ENCODE measurements at regions of chr4 and their contacts with region 1.

Region 1: DNA sequence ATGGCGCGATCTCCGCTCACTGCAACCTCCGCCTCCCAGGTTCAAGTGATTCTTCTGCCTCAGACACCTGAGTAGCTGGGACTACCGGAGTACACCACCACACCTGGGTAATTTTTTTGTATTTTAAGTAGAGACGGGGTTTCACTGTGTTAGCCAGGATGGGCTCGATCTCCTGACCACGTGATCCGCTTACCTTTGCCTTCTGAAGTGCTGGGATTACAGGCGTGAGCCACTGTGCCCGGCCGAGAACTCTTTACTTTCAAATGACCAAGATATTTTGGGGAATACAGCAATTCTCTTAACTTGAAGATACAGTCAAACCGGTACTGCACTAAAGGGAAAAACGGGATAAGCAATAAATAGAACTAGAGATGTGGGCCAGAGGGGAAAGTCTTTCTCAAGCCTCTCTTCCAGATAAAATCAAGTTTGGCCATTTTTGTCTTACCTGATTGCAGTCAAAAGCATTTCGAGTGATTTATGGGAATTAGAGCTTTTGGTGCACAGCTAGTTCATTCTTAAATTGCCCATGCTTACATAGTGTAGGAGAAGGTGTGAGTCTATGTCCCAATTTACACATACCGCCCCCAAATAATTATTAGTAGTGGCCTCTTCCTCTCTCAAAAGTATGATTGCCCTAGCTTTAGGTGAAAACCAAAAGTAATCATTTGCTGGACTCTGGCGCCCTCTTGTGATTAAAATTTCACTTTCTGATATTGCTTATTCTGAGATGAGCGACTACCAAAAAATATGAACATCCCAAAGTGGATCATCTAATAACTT is 53.2 kb upstream of the ABCG2 start:
- DNase-seq: peak; percentile 43 to 60 (median 58)
- H3K4me3 ChIP-seq: no peak overlapping the region
- H3K4me3 Mint-ChIP-seq: no peak overlapping the region
- H3K27ac ChIP-seq: no peak overlapping the region
- H3K27ac Mint-ChIP-seq: no peak overlapping the region
- H3K4me1 ChIP-seq: no peaks in the 10 kb centered on the region
- H3K4me1 Mint-ChIP-seq: peaks cover 0 to 3% (median 0%) of the 10 kb centered on the region in 4 donors
- H3K27me3 ChIP-seq: no peaks in the 10 kb centered on the region
- H3K27me3 Mint-ChIP-seq: peaks cover 3 to 5% of the 10 kb centered on the region in 2 donors

Region 2: GRCh38 chr4:87038837-87039615 is 1172.6 kb before region 1 on chr4:
- CTCF ChIA-PET with region 1: no interaction called
- POLR2A ChIA-PET with region 1: no interaction called
- intact Hi-C with region 1: no loop called
- DNase-seq: no peak
- H3K4me3 ChIP-seq: no peak overlapping the region
- H3K4me3 Mint-ChIP-seq: peak overlapping the region in 2 of 8 donors; percentile 1 to 2
- H3K27ac ChIP-seq: no peak overlapping the region
- H3K27ac Mint-ChIP-seq: peak overlapping the region in 3 of 7 donors; percentile 15 to 69 (median 51)
- H3K4me1 ChIP-seq: peaks cover 51% of the 10 kb centered on the region
- H3K4me1 Mint-ChIP-seq: peaks cover 45 to 85% (median 66%) of the 10 kb centered on the region in 4 donors
- H3K27me3 ChIP-seq: no peaks in the 10 kb centered on the region
- H3K27me3 Mint-ChIP-seq: no peaks in the 10 kb centered on the region

Region 3: GRCh38 chr4:87498446-87498900 is 713.2 kb before region 1 on chr4:
- CTCF ChIA-PET with region 1: interaction called, 6 read pairs
- POLR2A ChIA-PET with region 1: no interaction called
- intact Hi-C with region 1: loop called (anchors 2 kb)
- DNase-seq: no peak
- H3K4me3 ChIP-seq: no peak overlapping the region
- H3K4me3 Mint-ChIP-seq: peak overlapping the region in 7 of 8 donors; percentile 7 to 56 (median 25)
- H3K27ac ChIP-seq: no peak overlapping the region
- H3K27ac Mint-ChIP-seq: peak overlapping the region in 2 of 7 donors; percentile 29 to 53
- H3K4me1 ChIP-seq: peaks cover 3% of the 10 kb centered on the region
- H3K4me1 Mint-ChIP-seq: peaks cover 10 to 22% (median 14%) of the 10 kb centered on the region in 4 donors
- H3K27me3 ChIP-seq: no peaks in the 10 kb centered on the region
- H3K27me3 Mint-ChIP-seq: no peaks in the 10 kb centered on the region

Region 4: GRCh38 chr4:87848622-87849351 is 362.9 kb before region 1 on chr4:
- CTCF ChIA-PET with region 1: interaction called, 11 read pairs
- POLR2A ChIA-PET with region 1: no interaction called
- intact Hi-C with region 1: loop called (anchors 1 kb)
- DNase-seq: peak; percentile 21 to 45 (median 25)
- H3K4me3 ChIP-seq: no peak overlapping the region
- H3K4me3 Mint-ChIP-seq: peak overlapping the region in 7 of 8 donors; percentile 1 to 74 (median 61)
- H3K27ac ChIP-seq: no peak overlapping the region
- H3K27ac Mint-ChIP-seq: no peak overlapping the region
- H3K4me1 ChIP-seq: peaks cover 4% of the 10 kb centered on the region
- H3K4me1 Mint-ChIP-seq: peaks cover 0 to 9% (median 4%) of the 10 kb centered on the region in 4 donors
- H3K27me3 ChIP-seq: no peaks in the 10 kb centered on the region
- H3K27me3 Mint-ChIP-seq: peaks cover 16 to 20% of the 10 kb centered on the region in 2 donors

Region 5: GRCh38 chr4:88033309-88033708 is 178.4 kb before region 1 on chr4:
- CTCF ChIA-PET with region 1: interaction called, 93 read pairs
- POLR2A ChIA-PET with region 1: interaction called, 3 read pairs
- intact Hi-C with region 1: loop called (anchors 1 kb)
- DNase-seq: peak; percentile 32 to 55 (median 45)
- H3K4me3 ChIP-seq: no peak overlapping the region
- H3K4me3 Mint-ChIP-seq: no peak overlapping the region
- H3K27ac ChIP-seq: no peak overlapping the region
- H3K27ac Mint-ChIP-seq: no peak overlapping the region
- H3K4me1 ChIP-seq: no peaks in the 10 kb centered on the region
- H3K4me1 Mint-ChIP-seq: no peaks in the 10 kb centered on the region
- H3K27me3 ChIP-seq: no peaks in the 10 kb centered on the region
- H3K27me3 Mint-ChIP-seq: no peaks in the 10 kb centered on the region

Region 6: GRCh38 chr4:88341227-88342192 is 129.8 kb after region 1 on chr4:
- CTCF ChIA-PET with region 1: no interaction called
- POLR2A ChIA-PET with region 1: no interaction called
- intact Hi-C with region 1: no loop called
- DNase-seq: no peak
- H3K4me3 ChIP-seq: no peak overlapping the region
- H3K4me3 Mint-ChIP-seq: no peak overlapping the region
- H3K27ac ChIP-seq: no peak overlapping the region
- H3K27ac Mint-ChIP-seq: peak overlapping the region in 1 of 7 donors; percentile 0
- H3K4me1 ChIP-seq: no peaks in the 10 kb centered on the region
- H3K4me1 Mint-ChIP-seq: no peaks in the 10 kb centered on the region
- H3K27me3 ChIP-seq: no peaks in the 10 kb centered on the region
- H3K27me3 Mint-ChIP-seq: no peaks in the 10 kb centered on the region

Region 7: GRCh38 chr4:88523325-88524129 is 311.9 kb after region 1 on chr4 and contains the start of gene PYURF:
- CTCF ChIA-PET with region 1: interaction called, 469 read pairs
- POLR2A ChIA-PET with region 1: no interaction called
- intact Hi-C with region 1: no loop called
- DNase-seq: peak; percentile 60 to 73 (median 64)
- H3K4me3 ChIP-seq: peak within 1 kb of the TSS; percentile 62 to 69
- H3K4me3 Mint-ChIP-seq: peak within 1 kb of the TSS; percentile 91 to 97 (median 94)
- H3K27ac ChIP-seq: peak within 1 kb of the TSS; percentile 60
- H3K27ac Mint-ChIP-seq: peak within 1 kb of the TSS; percentile 89 to 96 (median 93)
- H3K4me1 ChIP-seq: peaks cover 17% of the 10 kb centered on the region
- H3K4me1 Mint-ChIP-seq: peaks cover 22 to 46% (median 32%) of the 10 kb centered on the region in 4 donors
- H3K27me3 ChIP-seq: no peaks in the 10 kb centered on the region
- H3K27me3 Mint-ChIP-seq: no peaks in the 10 kb centered on the region
- total RNA-seq, gene PYURF: 54.5 to 60.4 TPM

Region 8: DNA sequence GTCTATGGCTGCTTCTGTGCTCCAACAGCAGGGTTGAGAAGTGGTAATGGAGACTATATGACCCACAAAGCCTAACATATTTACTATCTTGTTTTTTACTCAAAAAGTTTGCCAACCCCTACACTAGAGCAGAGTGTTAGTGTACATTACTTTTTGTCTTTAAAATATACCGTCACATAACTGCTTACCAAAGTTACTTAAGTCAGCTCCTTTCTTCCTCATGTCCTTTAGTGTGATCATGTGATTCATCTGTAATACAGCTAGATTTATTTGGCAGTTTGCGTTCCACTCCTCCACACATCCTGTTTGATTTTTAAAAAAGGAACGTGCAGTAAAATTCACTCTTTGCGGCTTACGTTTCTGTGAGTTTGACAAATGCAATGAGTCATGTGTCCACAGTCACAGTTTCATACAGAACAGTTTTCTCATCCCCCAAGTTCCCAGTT is 1258.3 kb after region 1 on chr4:
- CTCF ChIA-PET with region 1: no interaction called
- POLR2A ChIA-PET with region 1: no interaction called
- intact Hi-C with region 1: no loop called
- DNase-seq: peak; percentile 5 to 45 (median 17)
- H3K4me3 ChIP-seq: peak overlapping the region in 1 of 2 donors; percentile 19
- H3K4me3 Mint-ChIP-seq: peak overlapping the region; percentile 13 to 66 (median 53)
- H3K27ac ChIP-seq: no peak overlapping the region
- H3K27ac Mint-ChIP-seq: peak overlapping the region in 5 of 7 donors; percentile 9 to 87 (median 58)
- H3K4me1 ChIP-seq: peaks cover 15% of the 10 kb centered on the region
- H3K4me1 Mint-ChIP-seq: peaks cover 8 to 22% (median 18%) of the 10 kb centered on the region in 4 donors
- H3K27me3 ChIP-seq: no peaks in the 10 kb centered on the region
- H3K27me3 Mint-ChIP-seq: no peaks in the 10 kb centered on the region

Measured in CD4-positive, alpha-beta memory T cell (primary cell).